ENCODE measurements at regions of chr19 and their contacts with region 1.

Region 1: GRCh38 chr19:32966750-32967149 is 5.0 kb downstream of the CEP89 start:
- DNase-seq: no peak
- H3K4me3 Mint-ChIP-seq: no peak overlapping the region
- H3K27ac Mint-ChIP-seq: no peak overlapping the region
- H3K4me1 Mint-ChIP-seq: no peaks in the 10 kb centered on the region
- H3K27me3 Mint-ChIP-seq: no peaks in the 10 kb centered on the region
- CTCF ChIP-seq: no peak

Region 2: DNA sequence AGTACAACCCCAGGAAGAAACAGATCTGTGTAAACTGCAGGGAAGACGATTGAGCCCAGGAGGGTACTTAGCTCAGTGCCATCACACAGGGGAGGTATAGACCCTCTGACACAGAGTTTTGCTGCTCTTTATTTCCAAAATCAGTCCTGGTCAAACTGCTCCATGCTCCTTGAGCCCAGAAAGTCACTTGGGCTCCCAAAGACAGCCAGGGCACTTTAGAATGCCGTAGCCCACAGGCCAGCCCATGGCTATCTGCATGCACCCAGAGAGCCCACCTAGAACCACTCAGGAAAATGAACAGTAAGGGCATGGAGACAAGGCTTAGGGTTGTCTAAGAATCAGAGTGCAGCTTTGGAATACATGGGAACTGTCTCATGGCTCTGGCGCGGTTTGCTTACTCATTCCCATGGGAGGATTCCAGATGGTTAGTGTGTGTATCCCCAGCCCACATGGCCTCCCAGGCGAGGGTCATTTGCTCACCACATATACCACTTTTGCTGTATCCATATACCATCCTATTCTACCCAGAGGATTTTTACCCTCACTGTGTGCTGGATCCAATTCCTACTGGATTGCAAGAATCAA is 400.4 kb before region 1 on chr19:
- CTCF ChIA-PET with region 1: no interaction called
- intact Hi-C with region 1: no loop called
- DNase-seq: no peak
- H3K4me3 Mint-ChIP-seq: no peak overlapping the region
- H3K27ac Mint-ChIP-seq: no peak overlapping the region
- H3K4me1 Mint-ChIP-seq: peaks cover 11% of the 10 kb centered on the region
- H3K27me3 Mint-ChIP-seq: peaks cover 35% of the 10 kb centered on the region
- CTCF ChIP-seq: no peak

Region 3: GRCh38 chr19:32735936-32736335 is 230.8 kb before region 1 on chr19:
- CTCF ChIA-PET with region 1: no interaction called
- intact Hi-C with region 1: no loop called
- DNase-seq: no peak
- H3K4me3 Mint-ChIP-seq: no peak overlapping the region
- H3K27ac Mint-ChIP-seq: no peak overlapping the region
- H3K4me1 Mint-ChIP-seq: no peaks in the 10 kb centered on the region
- H3K27me3 Mint-ChIP-seq: peaks cover 25% of the 10 kb centered on the region
- CTCF ChIP-seq: no peak

Region 4: DNA sequence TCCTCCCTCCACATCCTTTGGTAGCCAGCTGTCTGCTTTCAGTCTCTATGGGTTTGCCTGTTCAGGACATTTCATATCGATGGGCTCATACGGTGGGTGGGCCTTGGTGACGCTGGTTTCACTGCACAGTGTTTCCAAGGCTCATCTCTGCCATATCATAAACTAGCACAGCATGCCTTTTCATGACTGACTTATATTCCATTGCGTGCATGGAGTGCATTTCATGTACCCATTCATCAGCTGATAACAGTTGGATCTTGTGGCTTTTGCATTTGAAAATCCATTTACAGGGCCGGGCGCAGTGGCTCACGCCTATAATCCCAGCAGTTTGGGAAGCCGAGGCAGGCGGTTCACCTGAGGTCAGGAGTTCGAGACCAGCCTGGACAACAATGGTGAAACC is 177.3 kb before region 1 on chr19:
- CTCF ChIA-PET with region 1: no interaction called
- intact Hi-C with region 1: no loop called
- DNase-seq: no peak
- H3K4me3 Mint-ChIP-seq: no peak overlapping the region
- H3K27ac Mint-ChIP-seq: no peak overlapping the region
- H3K4me1 Mint-ChIP-seq: no peaks in the 10 kb centered on the region
- H3K27me3 Mint-ChIP-seq: peaks cover 28% of the 10 kb centered on the region
- CTCF ChIP-seq: no peak

Region 5: GRCh38 chr19:32930567-32930966 is 36.2 kb before region 1 on chr19:
- CTCF ChIA-PET with region 1: interaction called, 10 read pairs
- intact Hi-C with region 1: no loop called
- DNase-seq: no peak
- H3K4me3 Mint-ChIP-seq: no peak overlapping the region
- H3K27ac Mint-ChIP-seq: no peak overlapping the region
- H3K4me1 Mint-ChIP-seq: peaks cover 12% of the 10 kb centered on the region
- H3K27me3 Mint-ChIP-seq: no peaks in the 10 kb centered on the region
- CTCF ChIP-seq: no peak

Measured in Calu3 (cell line).